Right ventricle myocardium superior (tissue), 1 donor: ENCODE measurements at regions of chr19 and their contacts with region 1.

Region 1: GRCh38 chr19:51439021-51439465 is 19.2 kb downstream of the SIGLEC8 start:
- DNase-seq: no peak
- ATAC-seq: no peak

Region 2: GRCh38 chr19:51338563-51339312 is 100.3 kb before region 1 on chr19:
- intact Hi-C with region 1: loop called (anchors 2 kb)
- DNase-seq: peak; percentile 89
- ATAC-seq: peak; percentile 81

Region 3: DNA sequence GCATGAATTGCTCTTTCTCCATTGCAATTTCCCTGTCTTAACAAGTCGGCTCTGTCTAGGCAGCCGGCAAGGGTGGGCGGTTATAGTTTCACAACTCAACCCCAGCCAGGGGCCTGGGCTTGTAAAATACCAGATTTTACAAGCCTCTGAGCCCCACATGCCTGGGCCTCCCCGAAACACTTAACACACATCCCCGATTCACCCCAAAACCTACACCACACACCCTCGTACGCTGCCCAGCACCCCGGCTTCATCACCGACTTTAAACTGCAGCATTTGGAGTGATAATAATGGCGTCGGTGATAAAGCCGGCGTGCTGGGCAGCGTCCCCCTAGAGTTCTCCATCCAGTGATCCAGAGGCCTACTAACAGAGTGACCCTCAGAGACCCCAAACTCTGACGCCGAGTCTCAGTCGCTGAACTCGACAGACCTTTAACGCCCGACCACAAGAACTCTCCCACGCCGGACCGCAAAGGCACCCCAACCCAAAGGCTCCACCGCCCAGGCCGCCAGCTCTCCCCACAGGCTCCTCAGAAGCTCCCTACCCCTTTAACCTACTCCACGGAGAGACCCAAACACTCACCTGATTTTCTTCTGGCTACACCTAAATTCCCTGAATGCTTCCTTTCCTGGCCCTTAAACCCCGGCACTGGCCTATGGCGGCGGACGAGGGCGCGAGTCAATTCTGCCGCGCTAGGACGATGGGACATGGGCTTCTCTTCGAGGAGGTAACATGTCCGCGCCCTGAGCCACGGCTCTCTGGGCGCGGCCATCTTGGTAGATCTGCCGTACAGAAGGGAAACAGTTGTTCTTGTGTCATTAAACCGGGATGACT is 465.5 kb after region 1 on chr19 and contains the start of gene ZNF649:
- intact Hi-C with region 1: no loop called
- DNase-seq: peak; percentile 91
- ATAC-seq: peak; percentile 100
- total RNA-seq, gene ZNF649: 6.4 TPM